Psoas muscle (tissue), 8 donors: ENCODE measurements at regions of chr1 and their contacts with region 1.

Region 1: DNA sequence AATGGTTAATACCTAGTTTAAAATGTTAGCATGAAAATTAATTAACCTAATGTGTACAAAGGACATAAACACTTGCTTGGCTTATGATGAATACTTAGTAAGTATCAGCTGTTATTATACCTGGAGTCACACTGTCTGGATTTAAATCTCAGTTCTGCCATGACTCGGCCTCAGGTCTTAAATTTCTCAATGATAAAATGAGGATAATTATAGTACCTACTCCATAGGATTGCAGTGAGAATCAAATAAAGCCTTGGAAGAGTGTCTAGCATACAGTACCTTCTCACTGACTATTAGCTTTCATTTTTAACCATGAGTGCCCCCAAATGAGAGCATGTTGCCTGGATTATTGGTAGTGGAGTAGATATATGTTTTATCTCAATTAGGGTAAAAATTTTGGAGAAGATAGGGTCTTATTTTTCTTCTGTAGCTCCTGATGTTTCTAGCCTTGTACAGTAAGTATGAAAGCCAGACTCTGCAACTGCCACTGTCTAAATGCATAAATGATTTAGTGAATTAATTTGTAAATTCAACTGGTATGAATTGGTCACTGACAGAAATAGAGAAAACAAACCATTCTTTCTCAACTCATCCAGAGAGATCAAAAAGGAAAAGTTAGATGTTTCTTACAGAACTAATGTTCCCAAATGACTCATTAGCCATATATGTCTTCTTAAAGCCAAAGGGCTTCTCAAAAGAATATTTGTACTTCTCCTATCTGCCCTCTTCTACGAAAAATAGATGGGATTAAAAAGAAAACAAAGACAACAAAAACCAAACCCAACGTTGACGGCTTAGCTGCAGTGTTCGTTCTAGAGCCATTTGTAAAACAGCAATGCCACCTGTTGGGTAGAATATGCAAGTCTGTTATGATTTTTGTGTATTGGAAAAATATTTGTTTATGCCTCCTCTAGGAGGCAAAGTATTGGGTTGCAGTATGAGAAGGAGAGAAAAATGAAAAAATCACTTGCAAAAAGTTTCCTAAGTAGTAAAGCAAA is 53.8 kb upstream of the MROH9 start:
- DNase-seq: no peak
- ATAC-seq: peak; percentile 63 to 82 (median 76)
- H3K4me3 ChIP-seq: peak overlapping the region; percentile 40
- H3K27ac ChIP-seq: no peak overlapping the region
- H3K4me1 ChIP-seq: peaks cover 11% of the 10 kb centered on the region
- H3K27me3 ChIP-seq: no peaks in the 10 kb centered on the region
- CTCF ChIP-seq: peak; percentile 62

Region 2: DNA sequence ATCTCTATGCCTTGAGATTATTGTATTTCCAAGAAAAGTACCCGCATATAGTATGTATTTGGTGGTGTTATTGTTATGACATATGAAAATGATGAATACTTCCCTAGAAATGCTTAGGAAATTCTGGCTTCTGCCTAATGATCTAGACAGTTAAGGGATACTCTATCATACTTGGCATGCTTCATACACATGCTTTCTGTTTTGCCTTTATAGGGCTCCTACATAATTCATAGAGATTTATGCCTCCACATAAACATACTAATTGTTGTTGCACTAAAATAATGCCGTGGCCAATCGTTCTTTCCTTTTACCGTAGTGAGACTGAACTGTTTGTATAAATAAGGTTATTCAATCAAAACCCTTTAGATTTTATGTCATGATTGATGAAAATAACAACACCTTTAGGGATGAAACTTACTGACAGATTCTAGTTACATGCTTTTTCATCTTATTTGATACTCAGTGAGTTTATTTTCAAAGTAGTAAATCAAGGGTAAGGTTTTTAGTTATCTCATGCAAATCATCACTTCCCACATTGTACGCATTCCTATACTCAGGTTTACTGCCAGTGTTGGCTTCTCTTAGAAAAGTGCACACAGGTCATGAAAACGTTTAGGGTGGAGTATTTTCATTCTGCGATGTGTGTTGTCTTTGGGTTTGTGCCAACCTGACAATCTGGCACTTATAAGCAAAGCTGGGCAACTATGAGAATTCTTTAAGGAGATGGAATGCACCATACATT is 947.4 kb before region 1 on chr1:
- intact Hi-C with region 1: loop called in 1 of 2 experiments (anchors 5 kb)
- DNase-seq: no peak
- ATAC-seq: no peak
- H3K4me3 ChIP-seq: no peak overlapping the region
- H3K27ac ChIP-seq: no peak overlapping the region
- H3K4me1 ChIP-seq: no peaks in the 10 kb centered on the region
- H3K27me3 ChIP-seq: no peaks in the 10 kb centered on the region
- CTCF ChIP-seq: no peak

Region 3: DNA sequence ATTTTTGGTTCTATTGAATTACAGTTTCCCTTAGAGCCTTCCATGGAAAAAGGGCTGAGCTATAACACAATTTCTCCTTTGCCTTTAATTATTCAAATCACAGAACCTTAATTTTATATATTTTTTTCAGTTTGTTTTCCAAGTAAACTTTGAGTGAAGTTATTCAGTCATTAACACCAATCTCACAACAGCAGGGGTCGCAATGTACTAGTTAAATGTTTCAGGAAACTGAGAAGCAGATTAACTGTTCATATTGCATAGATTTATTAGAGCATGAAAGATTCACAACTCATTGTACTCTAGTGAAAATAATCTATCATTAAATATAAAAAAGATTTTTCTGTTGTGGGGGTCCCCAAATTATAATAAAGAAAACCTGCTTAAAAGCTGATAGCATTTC is 871.1 kb before region 1 on chr1:
- intact Hi-C with region 1: loop called in 1 of 2 experiments (anchors 10 kb)
- DNase-seq: no peak
- ATAC-seq: no peak
- H3K4me3 ChIP-seq: no peak overlapping the region
- H3K27ac ChIP-seq: no peak overlapping the region
- H3K4me1 ChIP-seq: no peaks in the 10 kb centered on the region
- H3K27me3 ChIP-seq: no peaks in the 10 kb centered on the region
- CTCF ChIP-seq: peak; percentile 47

Region 4: DNA sequence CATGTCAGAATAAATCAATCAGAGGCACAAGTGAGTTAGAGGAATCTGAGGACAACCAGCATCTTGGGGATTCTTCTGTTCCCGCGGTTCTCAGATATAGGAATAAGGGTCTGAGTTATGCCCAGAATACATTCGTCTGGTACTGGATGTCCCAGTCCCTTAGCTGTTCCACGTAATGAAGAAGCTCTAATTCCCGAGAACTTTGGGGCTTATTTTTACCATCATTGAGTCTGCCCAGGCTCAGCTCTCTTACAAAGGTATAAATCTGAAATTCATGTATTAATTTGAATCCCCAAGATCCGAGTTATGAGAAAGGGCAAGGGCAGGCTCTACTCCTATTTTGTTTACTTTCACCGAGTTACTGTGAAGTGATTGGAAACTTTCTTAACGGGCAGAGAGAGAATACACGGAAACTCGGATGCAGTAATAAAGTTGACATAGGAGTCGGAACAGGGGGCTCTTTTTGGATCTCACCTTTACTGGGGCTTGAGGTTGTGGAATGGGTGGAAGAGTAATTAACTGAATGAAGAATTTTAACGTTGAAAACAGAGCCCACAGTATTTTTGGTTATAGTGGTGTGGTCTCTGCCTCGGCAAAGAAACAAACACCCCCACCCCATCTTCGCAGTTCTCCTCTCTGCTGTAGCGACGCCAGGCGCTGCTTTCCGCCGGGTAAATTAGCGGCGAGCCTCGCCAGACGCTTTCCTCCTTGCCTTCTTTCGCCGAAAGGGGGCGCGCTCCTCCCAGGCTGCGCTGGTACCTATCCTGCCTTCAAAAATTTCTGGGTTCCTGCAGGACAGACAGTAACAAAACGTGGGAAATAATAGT is 210.6 kb before region 1 on chr1:
- intact Hi-C with region 1: loop called in 1 of 2 experiments (anchors 2 kb)
- DNase-seq: peak; percentile 68 to 88
- ATAC-seq: peak in 2 of 4 donors; percentile 15 to 43
- H3K4me3 ChIP-seq: peak overlapping the region; percentile 72
- H3K27ac ChIP-seq: peak overlapping the region; percentile 91
- H3K4me1 ChIP-seq: peaks cover 58% of the 10 kb centered on the region
- H3K27me3 ChIP-seq: peaks cover 0 to 6% (median 2%) of the 10 kb centered on the region in 3 donors
- CTCF ChIP-seq: peak; percentile 52